ENCODE measurements at regions of chr18 and their contacts with region 1.

Region 1: GRCh38 chr18:12391618-12392165 is 14.7 kb upstream of the AFG3L2 start:
- DNase-seq: no peak
- H3K4me3 ChIP-seq: no peak overlapping the region
- H3K27ac ChIP-seq: no peak overlapping the region
- H3K4me1 ChIP-seq: no peaks in the 10 kb centered on the region
- H3K27me3 ChIP-seq: no peaks in the 10 kb centered on the region
- CTCF ChIP-seq: peak; percentile 20 to 88 (median 85)
- POLR2A ChIP-seq: no peak

Region 2: DNA sequence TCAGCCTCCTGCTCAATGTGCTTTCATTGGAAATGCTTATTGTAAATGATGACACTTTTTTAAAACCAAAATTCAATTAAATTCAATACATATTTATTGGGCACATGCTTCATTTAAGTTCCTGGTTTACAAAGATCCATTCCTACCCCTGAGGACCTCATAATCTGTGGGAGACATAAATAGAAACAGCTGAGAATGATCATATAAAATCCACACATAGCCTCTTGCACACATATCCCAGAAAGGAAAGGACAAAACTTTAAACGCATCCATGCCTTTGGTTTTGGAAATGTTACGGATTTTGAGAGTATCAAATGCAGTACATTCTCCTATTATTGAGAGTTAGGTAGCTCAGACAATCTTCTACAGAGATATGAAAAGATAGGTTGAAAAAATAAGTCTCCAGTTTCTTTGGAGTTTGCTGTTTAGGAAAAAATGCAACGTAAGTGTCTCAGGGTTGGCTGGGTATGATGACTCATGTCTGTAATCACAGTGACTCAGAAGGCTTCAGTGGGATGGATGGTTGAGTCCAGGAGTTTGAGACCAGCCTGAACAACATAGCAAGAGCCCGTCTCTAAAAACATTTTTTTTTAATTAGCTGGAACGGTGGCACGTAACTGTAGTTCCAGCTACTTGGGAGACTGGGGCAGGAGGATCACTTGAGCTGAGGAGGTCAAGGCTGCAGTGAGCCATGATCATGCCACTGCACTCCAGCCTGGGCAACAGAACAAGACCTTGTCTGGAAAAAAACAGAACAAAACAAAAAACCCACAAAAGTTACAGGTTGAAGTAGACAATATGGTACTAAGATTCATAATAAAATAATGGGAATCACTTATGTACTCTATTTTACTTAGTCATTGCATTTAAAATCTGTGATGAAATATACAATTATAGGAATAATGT is 12.2 kb after region 1 on chr18:
- intact Hi-C with region 1: loop called (anchors 1 kb)
- DNase-seq: no peak
- H3K4me3 ChIP-seq: no peak overlapping the region
- H3K27ac ChIP-seq: no peak overlapping the region
- H3K4me1 ChIP-seq: no peaks in the 10 kb centered on the region
- H3K27me3 ChIP-seq: no peaks in the 10 kb centered on the region
- CTCF ChIP-seq: no peak
- POLR2A ChIP-seq: no peak

Region 3: DNA sequence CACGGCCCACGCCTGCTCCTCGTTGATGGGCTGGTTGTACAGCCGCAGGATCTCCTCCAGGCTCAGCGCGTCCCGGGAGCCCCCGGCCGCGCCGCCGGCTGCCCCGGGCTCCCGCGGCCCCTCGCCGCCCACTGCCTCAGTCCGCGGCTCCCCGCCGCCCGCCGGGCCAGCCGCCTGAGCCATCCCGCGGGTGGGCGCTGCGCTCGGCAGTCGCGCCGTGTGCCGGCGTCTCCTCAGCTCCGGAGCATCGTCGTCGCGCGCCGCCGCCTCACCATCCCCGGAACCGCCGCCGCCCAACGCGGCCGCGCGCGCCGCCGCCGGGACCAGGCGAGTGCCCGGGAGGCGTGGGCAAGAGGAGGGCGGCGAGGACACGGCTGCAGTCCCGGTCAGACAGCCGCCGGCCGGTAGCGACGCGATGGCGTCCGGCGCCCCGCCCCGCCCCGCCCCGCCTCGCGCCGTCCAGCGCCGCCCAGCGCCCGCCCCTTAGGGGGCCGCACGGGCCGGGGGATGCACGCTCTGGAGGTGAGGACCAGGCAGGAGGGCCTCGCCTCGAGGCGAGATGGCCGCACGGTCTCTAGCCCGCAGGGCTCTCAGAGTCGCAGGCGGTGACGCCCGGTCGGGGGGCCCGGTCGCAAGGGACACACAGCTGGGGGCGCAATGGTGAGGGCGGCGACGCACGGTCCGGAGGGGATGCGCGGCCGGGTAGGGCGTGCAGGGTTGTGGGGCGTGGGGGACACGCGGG is 266.2 kb after region 1 on chr18 and contains the start of gene SPIRE1:
- intact Hi-C with region 1: loop called (anchors 10 kb)
- DNase-seq: peak in 1 of 2 donors; percentile 28
- H3K4me3 ChIP-seq: peak within 1 kb of the TSS; percentile 66 to 81 (median 79)
- H3K27ac ChIP-seq: peak within 1 kb of the TSS; percentile 93 to 95
- H3K4me1 ChIP-seq: no peaks in the 10 kb centered on the region
- H3K27me3 ChIP-seq: no peaks in the 10 kb centered on the region
- CTCF ChIP-seq: peak in 1 of 3 donors; percentile 9
- POLR2A ChIP-seq: no peak
- total RNA-seq, gene SPIRE1: 24.3 to 38.5 (median 25.9) TPM

Measured in breast epithelium (tissue), 4 donors.